Aorta (tissue), 5 donors: ENCODE measurements at regions of chr10 and their contacts with region 1.

Region 1: DNA sequence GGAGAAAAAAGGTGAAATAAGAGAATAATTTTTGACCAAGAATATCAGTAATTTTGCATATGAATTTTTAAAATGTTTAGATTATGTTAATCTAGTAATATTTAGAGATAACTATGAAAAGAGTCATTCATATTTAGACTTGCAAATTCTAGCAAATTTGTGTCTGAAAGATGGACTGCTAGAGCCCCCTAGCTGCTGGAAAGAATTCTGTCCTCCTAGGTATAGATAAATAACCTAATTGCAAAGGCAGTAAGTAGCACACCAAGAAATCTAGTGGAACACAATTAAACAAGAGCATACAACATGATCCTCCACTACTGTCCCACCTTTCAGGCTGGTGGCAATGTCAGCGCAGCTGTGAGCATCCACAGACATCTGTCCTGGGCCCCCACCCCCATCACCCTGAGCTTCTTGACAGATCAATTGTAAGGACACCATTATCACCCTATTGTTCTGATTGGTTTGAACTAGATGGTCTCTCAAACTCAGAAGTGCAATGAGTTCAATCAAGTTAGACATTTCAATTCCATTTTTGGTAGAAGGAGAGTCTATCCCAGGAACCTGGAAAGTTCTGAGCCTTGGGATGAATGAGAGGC is 15.0 kb upstream of the GFRA1 start:
- DNase-seq: no peak
- ATAC-seq: no peak
- H3K4me3 ChIP-seq: no peak overlapping the region
- H3K27ac ChIP-seq: no peak overlapping the region
- H3K4me1 ChIP-seq: no peaks in the 10 kb centered on the region
- H3K27me3 ChIP-seq: no peaks in the 10 kb centered on the region

Region 2: DNA sequence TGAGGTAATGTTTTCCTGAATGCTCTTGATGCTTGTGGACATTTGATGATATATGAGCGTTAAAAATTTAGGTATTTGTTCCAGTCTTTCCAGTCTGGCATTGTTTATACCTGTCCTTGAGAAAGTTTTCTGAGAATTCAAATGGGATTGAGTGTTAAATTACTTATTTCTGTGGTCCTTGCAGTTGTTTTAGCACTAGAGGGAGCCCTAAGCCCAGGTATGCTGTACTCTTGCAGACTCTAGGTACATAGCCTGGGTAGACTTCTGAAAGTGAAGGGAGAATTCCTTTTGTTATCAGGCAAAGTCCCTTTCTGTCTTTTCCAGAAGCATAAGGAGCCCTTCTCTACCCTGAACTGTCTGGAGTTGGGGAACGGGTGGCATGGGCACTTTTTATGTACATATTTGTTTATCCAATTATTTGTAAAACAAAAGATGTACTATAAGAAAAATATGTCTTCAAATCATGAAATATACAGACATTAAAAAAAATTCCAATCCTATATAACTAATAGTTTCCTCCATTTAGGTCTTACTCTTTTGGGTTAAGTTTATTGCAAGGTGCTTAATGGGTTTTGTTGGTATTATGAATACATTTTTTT is 932.7 kb before region 1 on chr10:
- intact Hi-C with region 1: loop called (anchors 5 to 10 kb)
- DNase-seq: no peak
- ATAC-seq: no peak
- H3K4me3 ChIP-seq: no peak overlapping the region
- H3K27ac ChIP-seq: no peak overlapping the region
- H3K4me1 ChIP-seq: no peaks in the 10 kb centered on the region
- H3K27me3 ChIP-seq: no peaks in the 10 kb centered on the region

Region 3: DNA sequence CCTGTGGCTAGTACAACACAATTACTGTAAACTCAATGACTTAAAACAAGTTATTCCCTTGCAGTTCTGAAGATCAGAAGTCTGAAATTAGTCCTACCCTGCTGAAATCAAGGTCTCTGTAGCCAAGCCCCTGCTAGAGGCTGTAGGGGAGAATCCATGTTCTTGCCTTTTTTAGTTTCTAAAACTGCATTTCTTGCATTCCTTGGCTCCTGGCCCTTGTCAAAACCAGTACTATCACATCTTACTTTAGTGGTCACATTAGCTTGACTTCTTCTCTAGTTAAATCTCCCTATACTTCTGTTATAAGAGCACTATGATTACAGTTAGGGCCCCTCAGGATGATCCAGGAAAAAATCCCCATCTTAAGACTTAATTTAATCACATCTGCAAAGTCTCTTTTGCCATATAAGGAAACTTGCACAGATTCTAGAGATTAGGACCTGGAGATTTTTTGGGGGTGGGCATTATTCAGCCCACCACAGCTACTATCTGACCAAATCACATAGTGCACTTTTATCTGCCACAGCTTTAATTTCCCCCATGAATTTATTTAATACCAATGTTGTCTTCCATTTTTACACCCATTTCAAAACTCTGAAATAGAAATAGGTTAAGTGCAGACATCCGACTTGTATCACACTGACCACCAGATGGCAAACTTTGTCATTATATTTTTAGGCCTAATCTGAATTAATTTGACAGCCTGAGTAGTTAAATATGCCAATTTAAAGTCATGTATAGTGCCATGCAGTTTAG is 581.8 kb before region 1 on chr10:
- intact Hi-C with region 1: loop called (anchors 5 kb)
- DNase-seq: no peak
- ATAC-seq: no peak
- H3K4me3 ChIP-seq: no peak overlapping the region
- H3K27ac ChIP-seq: no peak overlapping the region
- H3K4me1 ChIP-seq: no peaks in the 10 kb centered on the region
- H3K27me3 ChIP-seq: no peaks in the 10 kb centered on the region

Region 4: GRCh38 chr10:115795964-115796363 is 492.0 kb before region 1 on chr10:
- intact Hi-C with region 1: loop called (anchors 5 kb)
- DNase-seq: peak in 1 of 2 donors; percentile 68
- ATAC-seq: no peak
- H3K4me3 ChIP-seq: no peak overlapping the region
- H3K27ac ChIP-seq: no peak overlapping the region
- H3K4me1 ChIP-seq: no peaks in the 10 kb centered on the region
- H3K27me3 ChIP-seq: no peaks in the 10 kb centered on the region